ENCODE measurements at regions of chr10 and their contacts with region 1.

Region 1: GRCh38 chr10:11823122-11823988 is at the start of gene PROSER2:
- DNase-seq: peak in 1 of 2 experiments; percentile 76
- H3K4me3 ChIP-seq: peak within 1 kb of the TSS; percentile 70 to 96 (median 71)
- H3K27ac ChIP-seq: no peak within 1 kb of the TSS; the same call in 1 of the 2 replicates
- H3K4me1 ChIP-seq: no peaks in the 10 kb centered on the region
- H3K27me3 ChIP-seq: peaks cover 0 to 3% (median 0%) of the 10 kb centered on the region in 4 experiments; a peak in 2 of 7 replicates
- CTCF ChIP-seq: peak in 2 of 3 experiments; percentile 7 to 13; a peak in 2 of 4 replicates
- EP300 ChIP-seq: no peak
- POLR2A ChIP-seq: peak in 1 of 2 experiments; percentile 26; a peak in 1 of 3 replicates
- RAD21 ChIP-seq: no peak
- total RNA-seq, gene PROSER2: 11.6 and 13.7 TPM in 2 replicates

Region 2: GRCh38 chr10:11730779-11731178 is 92.6 kb before region 1 on chr10:
- CTCF ChIA-PET with region 1: no interaction called
- POLR2A ChIA-PET with region 1: no interaction called
- DNase-seq: no peak
- H3K4me3 ChIP-seq: no peak overlapping the region
- H3K27ac ChIP-seq: no peak overlapping the region
- H3K4me1 ChIP-seq: no peaks in the 10 kb centered on the region
- H3K27me3 ChIP-seq: no peaks in the 10 kb centered on the region
- CTCF ChIP-seq: no peak
- EP300 ChIP-seq: no peak
- POLR2A ChIP-seq: no peak
- RAD21 ChIP-seq: no peak

Region 3: DNA sequence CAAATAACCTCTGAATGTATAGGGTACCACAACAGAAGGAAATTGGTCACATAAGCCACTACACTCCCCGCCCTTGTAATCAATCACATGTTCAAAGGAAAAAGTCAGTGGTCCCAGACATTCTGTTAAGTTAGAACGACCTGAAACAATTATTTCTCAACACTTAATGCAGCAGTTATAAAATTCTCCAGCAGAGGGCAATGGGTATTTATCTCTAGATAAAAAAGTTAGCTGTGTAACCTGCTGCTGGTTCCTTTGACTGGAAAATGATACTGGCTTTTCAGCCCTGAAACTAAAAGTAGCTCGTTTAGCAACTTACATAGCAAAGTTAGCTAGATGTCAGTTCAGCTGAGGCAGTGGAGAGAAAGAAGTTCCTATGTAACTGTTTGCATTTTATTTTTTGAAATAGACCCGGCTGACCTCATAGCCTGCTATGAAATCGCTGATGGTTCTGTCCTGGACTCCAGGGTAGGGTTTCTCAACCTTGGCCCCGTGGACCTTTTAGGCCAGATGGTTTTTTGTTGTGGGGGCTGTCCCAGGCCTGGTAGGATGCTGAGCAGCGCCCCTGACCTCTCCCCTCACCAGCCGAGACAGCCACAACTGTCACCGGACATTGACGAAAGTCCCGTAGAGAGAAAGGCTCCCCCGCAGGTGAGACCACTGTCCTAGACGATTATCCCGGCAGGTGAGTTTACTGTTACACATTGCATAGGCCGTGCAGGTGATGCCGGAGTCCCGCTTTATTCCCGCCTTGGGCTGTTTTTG is 40.4 kb before region 1 on chr10:
- CTCF ChIA-PET with region 1: interaction called, 18 read pairs
- POLR2A ChIA-PET with region 1: no interaction called
- DNase-seq: peak in 1 of 2 experiments; percentile 48
- H3K4me3 ChIP-seq: no peak overlapping the region
- H3K27ac ChIP-seq: no peak overlapping the region
- H3K4me1 ChIP-seq: no peaks in the 10 kb centered on the region
- H3K27me3 ChIP-seq: no peaks in the 10 kb centered on the region
- CTCF ChIP-seq: peak in 2 of 3 experiments; percentile 41 to 54; a peak in 2 of 4 replicates
- EP300 ChIP-seq: no peak
- POLR2A ChIP-seq: no peak
- RAD21 ChIP-seq: peak; percentile 60 to 62

Region 4: DNA sequence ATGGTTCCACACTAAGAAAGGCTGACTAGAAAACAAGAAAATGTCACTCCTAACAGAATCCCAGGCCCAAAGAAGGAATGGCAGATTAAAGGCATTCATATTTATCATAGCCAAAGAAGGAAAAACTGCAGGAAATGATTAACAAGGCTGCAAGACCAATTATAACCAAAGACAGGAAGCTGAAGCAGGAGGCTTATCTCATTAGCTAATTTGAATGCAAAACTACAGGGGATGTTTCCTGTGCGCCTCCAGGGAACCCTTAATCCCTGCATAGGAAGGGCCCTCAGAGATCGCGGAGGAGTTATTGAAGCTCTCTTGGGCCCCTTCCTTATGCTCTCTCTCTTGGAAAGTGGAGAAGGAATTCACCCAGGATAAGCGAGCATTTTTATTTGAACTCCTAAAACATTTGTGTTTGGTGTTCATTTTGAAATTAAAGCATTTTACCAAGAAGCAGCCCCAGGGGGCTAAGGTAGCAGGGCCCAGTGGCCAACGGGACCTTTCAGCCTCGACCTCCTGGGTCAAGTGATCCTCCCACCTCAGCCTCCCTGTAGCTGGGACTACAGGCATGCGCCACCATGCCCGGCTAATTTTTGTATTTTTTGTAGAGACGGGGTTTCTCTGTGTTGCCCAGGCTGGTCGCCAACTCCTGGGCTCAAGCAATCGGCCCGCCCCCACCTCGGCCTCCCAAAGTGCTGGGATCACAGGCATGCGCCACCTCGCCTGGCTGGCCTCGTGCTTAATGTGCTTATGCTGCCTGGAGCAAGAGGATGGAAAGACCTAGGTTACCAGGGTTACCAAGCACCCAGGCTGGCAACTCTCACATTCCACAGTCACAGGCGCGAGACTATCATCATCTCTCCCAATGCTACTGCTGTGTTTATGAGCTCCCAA is 24.3 kb before region 1 on chr10:
- CTCF ChIA-PET with region 1: interaction called, 55 read pairs
- POLR2A ChIA-PET with region 1: no interaction called
- DNase-seq: no peak
- H3K4me3 ChIP-seq: no peak overlapping the region; a peak in 2 of 8 replicates
- H3K27ac ChIP-seq: peak overlapping the region; percentile 2; the same call in 1 of the 2 replicates
- H3K4me1 ChIP-seq: peaks cover 0 to 7% (median 1%) of the 10 kb centered on the region in 4 experiments; a peak in 3 of 7 replicates
- H3K27me3 ChIP-seq: no peaks in the 10 kb centered on the region
- CTCF ChIP-seq: no peak
- EP300 ChIP-seq: no peak
- POLR2A ChIP-seq: no peak
- RAD21 ChIP-seq: no peak

Region 5: GRCh38 chr10:11838298-11838852 is 15.0 kb after region 1 on chr10:
- CTCF ChIA-PET with region 1: interaction called, 40 read pairs
- POLR2A ChIA-PET with region 1: no interaction called
- DNase-seq: no peak
- H3K4me3 ChIP-seq: no peak overlapping the region
- H3K27ac ChIP-seq: no peak overlapping the region
- H3K4me1 ChIP-seq: no peaks in the 10 kb centered on the region
- H3K27me3 ChIP-seq: no peaks in the 10 kb centered on the region
- CTCF ChIP-seq: no peak
- EP300 ChIP-seq: no peak
- POLR2A ChIP-seq: no peak
- RAD21 ChIP-seq: no peak

Region 6: DNA sequence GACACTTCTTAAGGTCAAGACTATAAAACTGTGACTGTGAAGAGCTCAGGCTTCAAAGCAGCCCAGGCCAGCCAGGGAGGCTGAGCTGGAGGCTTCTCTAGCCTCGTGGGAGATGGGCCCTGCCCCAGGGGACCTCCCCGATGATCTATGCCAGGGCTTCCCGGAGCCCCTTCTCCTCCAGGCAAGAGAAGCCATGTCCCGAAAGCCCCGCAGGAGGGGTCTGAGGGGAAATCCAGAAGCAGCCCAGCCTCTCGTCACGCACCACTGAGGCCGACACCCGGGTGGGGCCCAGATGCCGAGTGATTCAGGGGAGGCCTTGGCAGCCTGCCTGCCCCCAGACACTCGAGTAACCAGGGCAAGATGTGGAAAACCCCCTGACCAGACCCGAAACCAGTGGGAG is 63.5 kb after region 1 on chr10:
- CTCF ChIA-PET with region 1: interaction called, 11 read pairs
- POLR2A ChIA-PET with region 1: no interaction called
- DNase-seq: no peak
- H3K4me3 ChIP-seq: no peak overlapping the region
- H3K27ac ChIP-seq: no peak overlapping the region
- H3K4me1 ChIP-seq: no peaks in the 10 kb centered on the region
- H3K27me3 ChIP-seq: no peaks in the 10 kb centered on the region; a peak in 1 of 7 replicates
- CTCF ChIP-seq: no peak
- EP300 ChIP-seq: no peak
- POLR2A ChIP-seq: no peak
- RAD21 ChIP-seq: no peak

Region 7: GRCh38 chr10:11901833-11902475 is 78.6 kb after region 1 on chr10:
- CTCF ChIA-PET with region 1: no interaction called
- POLR2A ChIA-PET with region 1: no interaction called
- DNase-seq: no peak
- H3K4me3 ChIP-seq: no peak overlapping the region
- H3K27ac ChIP-seq: no peak overlapping the region
- H3K4me1 ChIP-seq: peaks cover 0 to 4% (median 1%) of the 10 kb centered on the region in 4 experiments; a peak in 2 of 7 replicates
- H3K27me3 ChIP-seq: no peaks in the 10 kb centered on the region
- CTCF ChIP-seq: no peak
- EP300 ChIP-seq: no peak
- POLR2A ChIP-seq: no peak
- RAD21 ChIP-seq: no peak

Region 8: DNA sequence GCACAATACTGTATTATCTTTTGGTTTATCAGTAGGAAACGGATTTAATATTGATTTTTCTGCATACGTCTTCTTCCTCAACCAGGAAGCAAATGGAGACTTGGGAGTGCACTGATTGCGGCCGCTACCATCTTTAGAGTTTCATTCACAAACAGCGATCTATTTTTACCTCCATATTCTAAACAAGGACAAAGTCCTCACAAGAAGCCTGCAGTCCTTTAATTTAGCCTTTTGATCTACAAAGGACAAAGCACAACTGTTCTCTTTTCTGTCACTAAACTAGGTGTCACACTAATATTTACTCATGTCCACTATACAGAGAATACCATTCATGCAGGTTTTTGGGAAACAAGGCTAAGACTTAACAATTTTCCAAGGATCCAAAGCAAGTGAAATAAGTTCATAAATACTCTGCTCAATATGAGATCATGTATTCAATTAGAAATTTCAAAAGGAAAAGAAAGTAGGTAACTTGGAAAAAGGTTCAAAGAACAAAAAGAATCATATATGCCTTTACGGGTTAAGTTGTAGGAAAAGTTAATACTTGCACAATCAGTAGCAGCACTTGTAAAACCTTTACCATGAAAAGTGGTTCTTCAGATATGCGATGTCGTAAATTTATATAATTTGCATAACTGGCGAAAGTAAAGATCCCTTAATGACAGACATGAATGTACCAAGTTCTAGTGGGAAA is 127.1 kb after region 1 on chr10:
- CTCF ChIA-PET with region 1: no interaction called
- POLR2A ChIA-PET with region 1: no interaction called
- DNase-seq: no peak
- H3K4me3 ChIP-seq: no peak overlapping the region
- H3K27ac ChIP-seq: no peak overlapping the region
- H3K4me1 ChIP-seq: no peaks in the 10 kb centered on the region
- H3K27me3 ChIP-seq: no peaks in the 10 kb centered on the region
- CTCF ChIP-seq: no peak
- EP300 ChIP-seq: no peak
- POLR2A ChIP-seq: no peak
- RAD21 ChIP-seq: no peak

Region 9: DNA sequence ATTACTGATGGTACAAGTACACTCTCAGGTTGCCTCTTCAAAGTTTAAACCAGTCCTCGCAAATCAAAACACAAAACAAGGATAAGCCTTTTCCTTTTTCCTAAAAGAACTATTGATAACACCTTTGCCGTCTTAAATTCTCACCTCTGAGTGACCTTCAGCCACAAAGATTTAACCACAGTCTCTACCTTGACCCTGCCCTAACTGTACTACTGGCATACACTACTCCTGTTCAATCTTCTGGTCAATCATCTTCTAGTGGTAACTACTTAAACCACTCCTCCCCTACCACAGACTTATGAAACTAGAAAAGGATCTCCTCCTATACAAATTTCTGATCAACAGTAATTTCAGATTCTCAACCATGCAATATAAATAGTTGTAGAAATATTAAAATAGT is 204.2 kb after region 1 on chr10:
- CTCF ChIA-PET with region 1: no interaction called
- POLR2A ChIA-PET with region 1: no interaction called
- DNase-seq: no peak
- H3K4me3 ChIP-seq: no peak overlapping the region
- H3K27ac ChIP-seq: no peak overlapping the region
- H3K4me1 ChIP-seq: no peaks in the 10 kb centered on the region
- H3K27me3 ChIP-seq: no peaks in the 10 kb centered on the region
- CTCF ChIP-seq: no peak
- EP300 ChIP-seq: no peak
- POLR2A ChIP-seq: no peak
- RAD21 ChIP-seq: no peak